ENCODE measurements at regions of chr9 and their contacts with region 1.

Region 1: DNA sequence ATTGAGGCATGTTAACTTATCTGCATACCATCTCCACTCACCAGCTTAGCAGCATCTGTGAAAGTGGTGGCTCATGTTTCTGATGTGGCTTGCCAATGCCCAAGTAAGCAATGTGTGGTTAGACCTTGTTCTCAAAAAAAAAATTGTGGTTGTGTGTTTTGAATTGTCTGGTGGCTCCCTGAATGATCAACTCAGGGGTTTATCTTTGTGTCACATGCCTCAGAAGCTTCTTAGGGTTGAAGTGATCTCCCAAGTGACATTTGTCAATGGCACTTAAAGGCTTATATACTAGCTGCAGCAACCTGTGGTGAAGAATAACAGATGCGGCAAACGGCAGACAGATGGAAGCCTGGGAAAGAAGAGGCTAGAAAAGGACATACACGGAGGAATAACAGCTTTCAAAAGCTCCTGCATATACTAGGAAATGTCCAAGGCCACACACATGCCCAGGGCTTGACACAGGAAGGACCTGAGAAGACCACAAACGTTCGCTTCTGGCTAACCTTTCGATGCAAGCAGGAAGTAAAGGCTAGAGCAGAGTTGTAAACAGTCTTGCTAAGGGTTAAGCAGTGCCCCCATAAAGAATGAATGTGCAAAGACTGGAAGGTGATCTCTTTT is 42.2 kb upstream of the FSD1L start:
- DNase-seq: no peak
- H3K4me3 ChIP-seq: no peak overlapping the region
- H3K27ac ChIP-seq: no peak overlapping the region
- H3K4me1 ChIP-seq: no peaks in the 10 kb centered on the region
- H3K27me3 ChIP-seq: no peaks in the 10 kb centered on the region
- CTCF ChIP-seq: no peak

Region 2: GRCh38 chr9:103816146-103816545 is 1589.5 kb before region 1 on chr9:
- CTCF ChIA-PET with region 1: no interaction called
- POLR2A ChIA-PET with region 1: interaction called, 12 read pairs
- intact Hi-C with region 1: no loop called
- DNase-seq: no peak
- H3K4me3 ChIP-seq: no peak overlapping the region
- H3K27ac ChIP-seq: no peak overlapping the region
- H3K4me1 ChIP-seq: no peaks in the 10 kb centered on the region
- H3K27me3 ChIP-seq: no peaks in the 10 kb centered on the region
- CTCF ChIP-seq: no peak

Region 3: GRCh38 chr9:105064315-105065097 is 341.1 kb before region 1 on chr9:
- CTCF ChIA-PET with region 1: no interaction called
- POLR2A ChIA-PET with region 1: no interaction called
- intact Hi-C with region 1: no loop called
- DNase-seq: peak; percentile 93 to 94
- H3K4me3 ChIP-seq: peak overlapping the region; percentile 36; the same call in 1 of the 2 replicates
- H3K27ac ChIP-seq: peak overlapping the region; percentile 97
- H3K4me1 ChIP-seq: peaks cover 43% of the 10 kb centered on the region
- H3K27me3 ChIP-seq: no peaks in the 10 kb centered on the region
- CTCF ChIP-seq: no peak

Region 4: GRCh38 chr9:105087910-105088888 is 317.4 kb before region 1 on chr9:
- CTCF ChIA-PET with region 1: no interaction called
- POLR2A ChIA-PET with region 1: no interaction called
- intact Hi-C with region 1: no loop called
- DNase-seq: no peak
- H3K4me3 ChIP-seq: no peak overlapping the region
- H3K27ac ChIP-seq: no peak overlapping the region
- H3K4me1 ChIP-seq: peaks cover 2% of the 10 kb centered on the region; the same call in 1 of the 2 replicates
- H3K27me3 ChIP-seq: no peaks in the 10 kb centered on the region
- CTCF ChIP-seq: no peak

Region 5: GRCh38 chr9:105168870-105169319 is 236.7 kb before region 1 on chr9:
- CTCF ChIA-PET with region 1: no interaction called
- POLR2A ChIA-PET with region 1: no interaction called
- intact Hi-C with region 1: no loop called
- DNase-seq: no peak
- H3K4me3 ChIP-seq: no peak overlapping the region
- H3K27ac ChIP-seq: no peak overlapping the region
- H3K4me1 ChIP-seq: no peaks in the 10 kb centered on the region
- H3K27me3 ChIP-seq: no peaks in the 10 kb centered on the region
- CTCF ChIP-seq: no peak

Measured in PC-9 (cell line).